ENCODE measurements at regions of chr1 and their contacts with region 1.

Region 1: GRCh38 chr1:108512239-108512981 is 47.5 kb upstream of the EEIG2 start:
- DNase-seq: no peak
- ATAC-seq: no peak
- H3K4me3 ChIP-seq: no peak overlapping the region
- H3K27ac ChIP-seq: no peak overlapping the region
- H3K4me1 ChIP-seq: no peaks in the 10 kb centered on the region
- H3K27me3 ChIP-seq: no peaks in the 10 kb centered on the region; a peak in 1 of 5 replicates
- CTCF ChIP-seq: peak; percentile 64
- EP300 ChIP-seq: no peak
- POLR2A ChIP-seq: no peak
- RAD21 ChIP-seq: 0 out of 2 replicates have a peak, but pooled peaks have one; percentile 34

Region 2: DNA sequence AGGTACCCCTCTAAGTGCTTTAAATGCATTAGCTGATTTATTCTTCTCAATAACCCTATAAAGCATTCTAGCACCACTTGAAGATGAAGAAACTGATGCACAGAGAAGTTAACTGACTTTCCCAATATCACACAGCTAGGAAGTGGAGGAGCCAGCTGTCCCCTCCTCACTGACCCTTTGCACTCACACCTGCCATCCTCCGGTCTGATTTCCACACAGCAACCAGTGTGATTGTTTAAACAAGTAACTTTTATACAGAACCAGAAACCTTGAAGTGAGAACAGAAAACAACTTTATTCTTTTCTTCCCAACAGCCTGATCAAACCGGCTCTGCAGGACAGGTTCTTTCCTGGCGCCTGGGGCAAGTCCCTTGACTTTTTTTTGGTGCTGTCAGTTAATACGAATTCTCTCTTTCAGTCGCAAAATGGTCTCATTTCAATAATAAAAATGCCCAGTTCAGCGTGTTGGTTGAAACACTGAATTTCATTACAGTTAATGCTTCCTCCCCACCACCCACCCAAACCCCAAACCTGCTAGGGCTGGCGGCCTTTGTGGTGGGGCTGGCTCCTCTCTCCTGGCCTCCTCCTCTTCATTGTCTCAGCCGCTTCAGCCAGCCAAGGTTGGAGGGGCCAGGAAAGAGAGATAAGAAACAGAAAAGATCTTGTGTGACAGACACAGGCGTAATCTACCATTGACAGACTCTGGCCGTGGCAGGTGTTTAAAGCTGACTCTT is 21.1 kb after region 1 on chr1:
- CTCF ChIA-PET with region 1: no interaction called
- POLR2A ChIA-PET with region 1: no interaction called
- in situ Hi-C with region 1: no loop called
- intact Hi-C with region 1: loop called (anchors 2 kb)
- DNase-seq: no peak
- ATAC-seq: no peak; the same call in 2 of the 3 replicates
- H3K4me3 ChIP-seq: no peak overlapping the region
- H3K27ac ChIP-seq: no peak overlapping the region
- H3K4me1 ChIP-seq: no peaks in the 10 kb centered on the region
- H3K27me3 ChIP-seq: no peaks in the 10 kb centered on the region
- CTCF ChIP-seq: no peak
- EP300 ChIP-seq: no peak
- POLR2A ChIP-seq: no peak
- RAD21 ChIP-seq: no peak

Region 3: DNA sequence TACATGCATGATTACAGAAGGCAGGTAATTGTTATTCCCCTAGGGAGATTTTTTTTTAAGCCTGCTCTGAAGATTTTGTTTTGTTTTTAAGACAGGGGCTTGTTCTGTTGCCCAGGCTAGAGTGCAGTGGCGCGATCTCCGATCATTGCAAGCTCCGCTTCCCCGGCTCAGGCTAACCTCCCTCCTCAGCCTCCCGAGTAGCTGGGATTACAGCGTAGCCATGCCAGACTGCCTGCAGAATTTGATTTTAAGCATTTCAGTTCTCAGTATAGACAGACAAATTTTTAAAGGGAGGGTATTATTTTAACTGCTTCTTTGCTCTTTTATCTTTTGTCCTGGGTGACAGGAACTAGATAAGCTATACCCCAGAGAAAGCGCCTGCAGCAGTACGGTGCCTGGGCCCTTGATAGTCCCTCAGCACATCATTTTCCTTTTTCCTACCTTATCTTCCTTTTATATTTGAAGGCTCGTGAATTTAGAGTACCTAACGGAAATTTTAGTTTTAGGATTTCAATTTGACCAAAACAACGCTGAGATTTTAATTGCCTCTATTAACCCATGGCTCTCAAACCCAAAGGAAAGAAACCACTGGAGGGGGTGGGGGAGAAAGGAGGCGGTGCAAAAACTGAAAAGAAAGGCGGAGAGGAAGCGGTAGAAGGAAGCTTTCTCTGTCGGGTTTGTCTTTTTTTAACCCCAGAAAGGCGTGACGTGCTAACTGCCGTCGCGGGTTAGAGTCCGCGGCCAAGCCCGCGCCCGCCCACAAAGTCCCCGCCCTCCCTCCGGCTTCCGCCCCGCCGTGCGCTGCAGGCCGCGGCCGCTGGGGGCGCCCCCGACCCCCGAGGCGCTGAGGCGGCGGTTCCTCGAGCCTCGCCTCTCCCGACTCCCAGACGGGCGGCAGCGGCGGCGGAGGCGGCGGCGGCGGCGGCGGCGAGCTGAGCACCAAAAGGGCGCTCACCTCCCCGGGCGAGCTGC is 47.1 kb after region 1 on chr1 and contains the start of gene EEIG2:
- CTCF ChIA-PET with region 1: interaction called, 50 read pairs
- POLR2A ChIA-PET with region 1: no interaction called
- in situ Hi-C with region 1: no loop called
- intact Hi-C with region 1: loop called (anchors 1 kb)
- DNase-seq: peak; percentile 48
- ATAC-seq: peak; percentile 89
- H3K4me3 ChIP-seq: peak within 1 kb of the TSS; percentile 54 to 77 (median 65)
- H3K27ac ChIP-seq: no peak within 1 kb of the TSS
- H3K4me1 ChIP-seq: peaks cover 21% of the 10 kb centered on the region
- H3K27me3 ChIP-seq: peaks cover 0 to 3% of the 10 kb centered on the region in 2 experiments; a peak in 1 of 5 replicates
- CTCF ChIP-seq: peak; percentile 69
- EP300 ChIP-seq: no peak
- POLR2A ChIP-seq: no peak
- RAD21 ChIP-seq: no peak
- total RNA-seq, gene EEIG2: 3.2 and 5.7 TPM in 2 replicates

Region 4: DNA sequence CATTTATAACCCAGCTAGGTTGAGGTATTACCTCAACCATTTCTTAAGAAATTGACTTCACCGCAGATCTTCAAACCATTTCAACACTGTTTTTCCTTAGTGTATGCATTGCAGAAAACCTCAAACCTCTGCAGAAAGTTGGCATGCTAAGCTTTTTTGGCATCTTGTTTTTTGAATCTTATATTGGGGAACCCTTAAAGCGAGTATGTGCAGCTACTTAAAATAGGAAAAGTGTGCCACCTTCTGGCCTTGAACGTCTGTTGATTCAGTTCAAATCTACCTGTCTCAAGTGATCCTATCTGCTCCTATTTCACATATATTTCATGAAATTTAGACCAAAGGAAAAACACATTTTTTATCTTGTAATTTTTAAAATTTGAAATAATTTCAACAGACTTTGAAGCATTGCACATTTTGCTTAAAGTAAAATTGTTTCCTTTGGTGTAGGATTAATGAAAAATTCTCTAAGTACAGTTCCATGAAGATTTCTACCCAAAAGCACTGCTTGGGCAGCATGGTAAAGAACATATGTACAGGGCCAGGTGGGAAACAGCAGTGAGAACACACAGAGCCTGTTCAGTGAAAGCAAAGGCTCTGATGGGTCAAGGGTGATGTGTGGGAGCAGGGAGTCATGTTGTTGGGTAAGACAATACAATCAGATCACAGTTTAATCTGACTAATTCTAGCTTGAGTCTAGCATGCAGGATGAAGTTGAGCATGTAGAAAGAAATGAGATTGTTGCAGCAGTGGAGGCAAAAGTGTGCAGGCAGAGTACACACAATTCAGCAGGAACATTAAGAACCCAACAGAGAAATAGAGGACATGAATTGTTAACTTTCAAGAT is 131.3 kb after region 1 on chr1:
- CTCF ChIA-PET with region 1: interaction called, 18 read pairs
- POLR2A ChIA-PET with region 1: no interaction called
- in situ Hi-C with region 1: no loop called
- intact Hi-C with region 1: loop called (anchors 1 kb)
- DNase-seq: peak; percentile 37
- ATAC-seq: peak; percentile 52; the same call in 2 of the 3 replicates
- H3K4me3 ChIP-seq: no peak overlapping the region
- H3K27ac ChIP-seq: no peak overlapping the region
- H3K4me1 ChIP-seq: peaks cover 34% of the 10 kb centered on the region
- H3K27me3 ChIP-seq: no peaks in the 10 kb centered on the region
- CTCF ChIP-seq: peak; percentile 66
- EP300 ChIP-seq: no peak
- POLR2A ChIP-seq: no peak
- RAD21 ChIP-seq: no peak

Region 5: DNA sequence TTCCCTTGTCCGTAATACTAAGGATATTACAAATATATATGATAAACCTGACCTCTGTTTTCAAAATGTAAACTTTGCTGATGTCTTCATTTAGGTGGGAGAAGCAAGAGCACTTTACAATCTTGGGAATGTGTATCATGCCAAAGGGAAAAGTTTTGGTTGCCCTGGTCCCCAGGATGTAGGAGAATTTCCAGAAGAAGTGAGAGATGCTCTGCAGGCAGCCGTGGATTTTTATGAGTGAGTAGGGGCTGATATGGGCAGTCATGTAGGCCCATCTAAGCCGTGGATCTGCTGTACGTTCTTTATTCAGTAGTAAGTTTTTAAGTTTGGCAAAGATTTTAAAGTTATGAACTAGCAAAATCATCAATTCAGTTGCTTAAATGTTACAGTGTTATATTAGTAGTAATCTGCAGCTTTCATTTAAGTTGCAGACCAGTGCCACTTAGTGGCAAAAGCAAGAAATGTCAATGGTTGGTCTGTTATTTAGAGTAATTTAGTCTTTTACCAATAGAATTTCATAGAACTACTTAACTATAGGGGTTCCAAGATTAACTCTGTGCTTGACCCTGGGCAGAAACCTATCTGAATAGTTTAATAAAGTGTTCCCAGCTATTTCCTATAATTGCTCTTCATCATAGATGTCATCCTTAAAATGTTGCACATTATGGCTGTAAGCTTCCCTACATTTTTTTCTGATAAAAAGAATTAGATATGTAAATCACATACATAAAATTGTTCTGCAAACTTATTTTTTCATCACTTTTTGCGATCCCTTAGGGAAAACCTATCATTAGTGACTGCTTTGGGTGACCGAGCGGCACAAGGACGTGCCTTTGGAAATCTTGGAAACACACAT is 385.7 kb after region 1 on chr1:
- CTCF ChIA-PET with region 1: no interaction called
- POLR2A ChIA-PET with region 1: no interaction called
- in situ Hi-C with region 1: no loop called
- intact Hi-C with region 1: loop called (anchors 2 kb)
- DNase-seq: peak; percentile 60
- ATAC-seq: peak; percentile 70
- H3K4me3 ChIP-seq: no peak overlapping the region
- H3K27ac ChIP-seq: no peak overlapping the region
- H3K4me1 ChIP-seq: no peaks in the 10 kb centered on the region
- H3K27me3 ChIP-seq: no peaks in the 10 kb centered on the region
- CTCF ChIP-seq: peak; percentile 67
- EP300 ChIP-seq: no peak
- POLR2A ChIP-seq: no peak
- RAD21 ChIP-seq: peak; percentile 56

Measured in HepG2 (cell line).